ENCODE measurements at regions of chr17 and their contacts with region 1.

Region 1: GRCh38 chr17:17001874-17002520 is 30.1 kb upstream of the TNFRSF13B start:
- DNase-seq: peak; percentile 69 to 96 (median 80)

Region 2: GRCh38 chr17:17041571-17042380 is 39.8 kb after region 1 on chr17:
- intact Hi-C with region 1: loop called (anchors 5 kb)
- DNase-seq: peak; percentile 97 to 100 (median 99)

Region 3: GRCh38 chr17:17108451-17109049 is 106.6 kb after region 1 on chr17:
- intact Hi-C with region 1: loop called (anchors 10 kb)
- DNase-seq: peak; percentile 53 to 96 (median 75)

Region 4: GRCh38 chr17:17141860-17142552 is 140.0 kb after region 1 on chr17:
- intact Hi-C with region 1: loop called (anchors 10 kb)
- DNase-seq: peak; percentile 69 to 97 (median 80)

Region 5: GRCh38 chr17:17303010-17303846 is 301.2 kb after region 1 on chr17 and contains the start of gene NT5M:
- intact Hi-C with region 1: no loop called
- DNase-seq: peak; percentile 61 to 97 (median 81)

Region 6: GRCh38 chr17:17313350-17313991 is 311.5 kb after region 1 on chr17:
- intact Hi-C with region 1: loop called (anchors 10 kb)
- DNase-seq: peak in 8 of 10 donors; percentile 22 to 92 (median 54)

Region 7: GRCh38 chr17:17325228-17325627 is 323.2 kb after region 1 on chr17:
- intact Hi-C with region 1: no loop called
- DNase-seq: peak in 2 of 10 donors; percentile 47 to 51